Activated CD4-positive, alpha-beta T cell treated with anti-CD3 and anti-CD28 coated beads for 36 hours (primary cell): ENCODE measurements at regions of chr1 and their contacts with region 1.

Region 1: DNA sequence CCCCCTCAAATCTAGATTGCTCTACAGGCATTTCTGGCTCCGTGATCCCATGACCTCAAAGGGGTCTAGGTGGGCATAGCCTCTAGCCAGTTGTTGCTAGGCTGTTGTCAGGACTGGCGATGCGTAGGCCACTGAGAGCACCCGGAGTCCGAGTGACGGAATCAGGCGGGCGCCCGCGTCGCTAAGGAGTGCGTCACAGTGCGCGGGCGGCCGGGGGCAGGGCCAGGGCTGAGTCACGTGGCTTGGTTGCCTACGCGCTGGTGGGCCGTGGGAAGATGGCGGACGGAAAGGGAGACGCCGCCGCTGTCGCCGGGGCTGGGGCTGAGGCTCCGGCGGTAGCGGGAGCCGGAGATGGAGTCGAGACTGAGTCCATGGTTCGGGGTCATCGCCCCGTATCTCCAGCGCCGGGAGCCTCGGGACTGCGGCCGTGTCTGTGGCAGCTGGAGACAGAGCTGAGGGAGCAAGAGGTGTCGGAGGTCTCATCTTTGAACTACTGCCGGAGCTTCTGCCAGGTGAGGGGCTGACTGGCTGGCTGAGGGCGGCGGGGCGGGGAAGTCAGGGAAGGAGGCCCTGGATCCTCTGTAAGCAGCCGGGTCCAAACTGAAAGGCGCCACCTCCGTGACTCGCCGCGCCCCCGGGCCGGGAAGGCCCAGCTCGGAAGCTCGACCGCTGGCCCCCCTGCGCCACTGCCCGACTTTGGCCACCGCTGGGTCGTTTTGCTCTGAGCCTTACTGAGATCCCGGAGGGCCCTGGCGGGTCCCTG is at the start of gene RLF:
- DNase-seq: peak; percentile 98
- ATAC-seq: peak; percentile 81
- H3K4me3 Mint-ChIP-seq: no peak within 1 kb of the TSS
- H3K27ac Mint-ChIP-seq: no peak within 1 kb of the TSS
- H3K4me1 Mint-ChIP-seq: peaks cover 4% of the 10 kb centered on the region
- H3K27me3 Mint-ChIP-seq: no peaks in the 10 kb centered on the region
- total RNA-seq, gene RLF: 20.1 to 20.9 TPM

Region 2: DNA sequence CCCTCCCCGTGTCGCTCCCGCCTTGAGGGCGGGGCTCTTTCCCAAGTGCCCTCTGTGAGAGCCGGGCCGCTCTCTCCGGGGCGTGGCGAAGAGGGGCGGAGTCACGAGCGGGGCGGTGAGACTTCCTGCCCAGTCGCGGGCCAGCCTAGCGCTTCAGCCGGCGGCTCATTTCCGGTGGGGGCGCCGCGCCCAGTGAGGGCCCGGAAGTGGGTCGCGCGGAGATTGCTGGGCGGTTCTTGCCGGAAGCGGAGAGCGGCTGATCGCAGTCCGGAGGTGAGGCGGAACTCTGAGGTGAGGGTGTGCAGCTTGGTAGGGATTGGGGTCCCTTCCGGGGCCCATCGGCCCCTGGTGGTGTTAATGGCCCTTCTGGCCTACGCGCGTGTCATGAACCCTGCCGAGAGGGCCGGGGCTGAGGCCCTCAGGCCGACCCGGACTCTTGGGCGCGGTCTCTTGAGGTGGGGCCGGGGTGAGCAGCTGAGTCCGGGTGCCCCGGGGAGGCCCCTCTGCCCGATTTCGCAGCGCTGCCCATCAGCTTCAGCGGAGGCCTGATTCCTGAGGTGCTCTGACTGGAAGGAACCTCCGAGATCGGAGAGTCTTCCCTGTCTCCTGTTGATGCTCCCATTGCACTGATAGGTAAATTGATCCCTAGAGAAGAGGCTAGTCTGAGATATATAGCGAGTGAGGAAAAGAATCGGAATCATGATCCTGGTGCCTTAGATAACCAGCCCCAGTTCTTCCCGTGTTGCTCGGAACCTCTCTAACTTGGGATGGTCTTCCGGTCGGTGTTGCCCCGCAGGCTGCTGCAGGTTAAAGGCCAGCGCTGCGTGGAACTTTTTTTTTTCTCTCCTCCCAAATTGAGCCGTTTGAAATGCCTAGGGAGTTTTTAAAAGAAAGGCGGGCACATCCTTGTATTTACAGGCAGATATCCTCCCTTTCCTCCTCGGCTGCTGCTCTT is 120.5 kb before region 1 on chr1 and contains the start of gene CAP1:
- CTCF ChIA-PET with region 1: no interaction called
- POLR2A ChIA-PET with region 1: no interaction called
- intact Hi-C with region 1: loop called in 1 of 2 experiments (anchors 1 kb)
- DNase-seq: peak; percentile 100
- ATAC-seq: peak; percentile 93
- H3K4me3 Mint-ChIP-seq: peak within 1 kb of the TSS; percentile 99
- H3K27ac Mint-ChIP-seq: peak within 1 kb of the TSS; percentile 99
- H3K4me1 Mint-ChIP-seq: peaks cover 58% of the 10 kb centered on the region
- H3K27me3 Mint-ChIP-seq: no peaks in the 10 kb centered on the region
- total RNA-seq, gene CAP1: 527 to 553 TPM

Region 3: DNA sequence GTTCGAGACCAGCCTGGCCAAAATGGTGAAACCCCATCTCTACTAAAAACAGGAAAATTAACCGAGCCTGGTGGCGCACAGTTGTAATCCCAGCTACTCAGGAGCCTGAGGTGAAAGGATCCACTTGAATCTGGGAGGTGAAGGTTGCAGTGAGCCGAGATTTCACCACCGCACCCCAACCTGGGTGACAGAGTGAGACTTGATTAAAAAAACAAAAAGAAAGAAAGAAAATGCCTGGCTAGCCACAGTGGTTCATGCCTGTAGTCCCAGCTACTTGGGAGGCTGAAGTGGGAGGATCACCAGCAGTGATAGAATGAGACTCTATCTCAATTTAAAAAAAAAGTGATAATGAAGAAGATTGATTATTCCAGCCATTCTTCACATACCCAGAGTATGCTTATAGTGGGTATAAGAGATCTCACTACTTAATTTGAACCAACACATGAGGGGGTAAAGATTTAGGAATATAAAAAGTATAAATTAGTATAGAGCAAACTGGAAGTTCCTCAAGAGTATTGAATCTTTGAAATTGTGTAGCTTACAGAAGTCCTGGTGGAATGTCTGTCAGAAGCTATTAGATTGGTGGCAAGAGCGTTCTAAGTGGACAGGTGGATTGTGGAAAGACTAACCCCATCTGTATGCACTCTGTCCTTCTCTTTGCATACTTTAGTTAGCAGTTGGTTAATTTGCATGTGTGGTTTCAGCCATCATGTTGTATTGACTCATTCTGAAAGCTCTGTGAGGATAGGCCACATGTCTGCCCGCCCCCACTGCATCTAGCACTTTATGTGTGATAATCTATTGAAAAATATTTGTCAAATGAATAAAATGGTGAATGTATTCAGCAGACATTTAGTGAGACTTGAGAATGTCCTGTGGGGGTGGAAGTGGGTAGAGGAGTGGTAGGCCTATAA is 24.9 kb after region 1 on chr1:
- CTCF ChIA-PET with region 1: interaction called, 6 read pairs
- POLR2A ChIA-PET with region 1: no interaction called
- intact Hi-C with region 1: loop called (anchors 1 kb)
- DNase-seq: peak; percentile 74
- ATAC-seq: peak; percentile 96
- H3K4me3 Mint-ChIP-seq: no peak overlapping the region
- H3K27ac Mint-ChIP-seq: peak overlapping the region; percentile 51
- H3K4me1 Mint-ChIP-seq: peaks cover 51% of the 10 kb centered on the region
- H3K27me3 Mint-ChIP-seq: no peaks in the 10 kb centered on the region

Region 4: DNA sequence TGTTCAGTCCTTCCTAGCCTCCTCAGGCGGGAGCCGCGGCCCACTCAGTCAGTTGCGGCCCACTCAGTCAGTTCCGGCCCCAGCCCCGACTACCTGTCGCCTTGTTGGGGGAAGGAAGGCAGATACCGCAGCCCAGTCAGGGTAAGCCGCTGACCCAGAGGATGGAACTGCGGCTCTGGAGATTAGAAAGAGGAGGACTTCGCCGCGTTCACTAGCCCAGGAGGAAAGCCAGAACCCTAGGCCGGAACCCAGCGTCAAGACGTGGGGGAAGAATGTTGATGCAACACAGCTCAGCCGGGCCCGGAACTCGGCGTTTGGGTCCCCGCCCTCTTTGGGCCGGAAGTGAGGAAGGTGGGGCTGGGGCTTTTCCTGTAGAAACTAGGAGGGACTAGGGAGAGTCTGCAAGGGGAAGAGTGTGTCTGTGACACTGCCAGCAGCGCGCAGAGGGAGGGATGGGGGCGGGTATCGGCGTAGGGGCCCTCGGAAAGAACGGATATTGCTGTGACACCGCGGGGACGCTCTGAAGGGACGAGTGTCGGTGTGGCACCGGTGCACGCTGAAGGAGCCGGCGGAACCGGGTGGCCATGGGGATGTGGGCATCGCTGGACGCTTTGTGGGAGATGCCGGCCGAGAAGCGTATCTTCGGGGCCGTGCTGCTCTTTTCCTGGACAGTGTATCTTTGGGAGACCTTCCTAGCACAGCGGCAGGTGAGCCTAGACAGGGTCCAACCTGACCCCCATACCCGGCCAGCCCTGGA is 96.6 kb after region 1 on chr1 and contains the start of gene ZMPSTE24:
- CTCF ChIA-PET with region 1: no interaction called
- POLR2A ChIA-PET with region 1: no interaction called
- intact Hi-C with region 1: loop called (anchors 1 kb)
- DNase-seq: peak; percentile 98
- ATAC-seq: peak; percentile 97
- H3K4me3 Mint-ChIP-seq: peak within 1 kb of the TSS; percentile 99
- H3K27ac Mint-ChIP-seq: peak within 1 kb of the TSS; percentile 100
- H3K4me1 Mint-ChIP-seq: peaks cover 47% of the 10 kb centered on the region
- H3K27me3 Mint-ChIP-seq: no peaks in the 10 kb centered on the region
- total RNA-seq, gene ZMPSTE24: 20.7 to 23.0 TPM

Region 5: GRCh38 chr1:40338745-40339424 is 177.6 kb after region 1 on chr1:
- CTCF ChIA-PET with region 1: interaction called, 198 read pairs
- POLR2A ChIA-PET with region 1: interaction called, 3 read pairs
- intact Hi-C with region 1: no loop called
- DNase-seq: peak; percentile 94
- ATAC-seq: peak; percentile 85
- H3K4me3 Mint-ChIP-seq: peak overlapping the region; percentile 14
- H3K27ac Mint-ChIP-seq: peak overlapping the region; percentile 69
- H3K4me1 Mint-ChIP-seq: peaks cover 42% of the 10 kb centered on the region
- H3K27me3 Mint-ChIP-seq: no peaks in the 10 kb centered on the region

Region 6: DNA sequence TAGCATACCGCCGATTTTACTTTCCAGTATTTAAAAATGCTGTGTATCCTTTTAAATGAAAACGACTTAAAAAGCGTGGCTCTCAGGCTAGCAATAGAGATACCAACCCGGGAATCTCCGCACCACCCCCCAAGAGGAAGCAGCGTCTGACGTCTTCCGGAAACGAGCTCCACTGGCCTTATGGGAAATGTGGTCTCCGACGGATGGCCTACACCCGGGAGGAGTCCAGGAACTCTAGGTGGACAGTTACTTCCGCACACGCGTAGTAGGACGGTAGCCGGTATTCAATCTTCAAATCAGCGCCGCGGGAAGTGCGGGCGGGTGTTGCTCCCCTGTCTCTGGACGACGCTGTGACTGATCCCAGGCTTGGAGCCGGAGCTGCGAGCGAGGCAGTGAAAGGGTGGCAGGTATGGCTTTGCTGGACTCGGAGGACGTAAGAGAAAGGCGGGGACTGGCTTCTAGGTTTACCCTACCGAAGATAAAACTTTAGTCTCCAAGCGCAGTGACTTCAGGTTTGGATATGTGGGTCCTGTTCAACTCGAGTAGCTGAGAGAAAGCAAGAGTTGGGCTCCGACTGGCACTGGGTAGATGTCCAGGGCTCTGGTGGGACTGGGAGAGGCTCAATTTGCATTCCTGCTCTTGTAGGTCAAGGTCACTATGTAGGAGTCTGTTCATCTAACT is 370.2 kb after region 1 on chr1 and contains the start of gene ZNF684:
- CTCF ChIA-PET with region 1: interaction called, 3 read pairs
- POLR2A ChIA-PET with region 1: no interaction called
- intact Hi-C with region 1: loop called in 1 of 2 experiments (anchors 5 kb)
- DNase-seq: peak; percentile 91
- ATAC-seq: peak; percentile 98
- H3K4me3 Mint-ChIP-seq: peak within 1 kb of the TSS; percentile 88
- H3K27ac Mint-ChIP-seq: peak within 1 kb of the TSS; percentile 83
- H3K4me1 Mint-ChIP-seq: peaks cover 17% of the 10 kb centered on the region
- H3K27me3 Mint-ChIP-seq: peaks cover 6% of the 10 kb centered on the region
- total RNA-seq, gene ZNF684: 4.5 to 6.6 TPM